ENCODE measurements at regions of chr3 and their contacts with region 1.

Region 1: GRCh38 chr3:156151824-156152428 is 31.5 kb downstream of the KCNAB1 start:
- DNase-seq: peak; percentile 29 to 74
- ATAC-seq: peak; percentile 79 to 91; a peak in 5 of 6 replicates
- H3K4me3 ChIP-seq: no peak overlapping the region
- H3K27ac ChIP-seq: no peak overlapping the region
- H3K4me1 ChIP-seq: no peaks in the 10 kb centered on the region
- CTCF ChIP-seq: peak; percentile 70
- EP300 ChIP-seq: no peak
- POLR2A ChIP-seq: no peak
- RAD21 ChIP-seq: peak; percentile 73 to 84

Region 2: DNA sequence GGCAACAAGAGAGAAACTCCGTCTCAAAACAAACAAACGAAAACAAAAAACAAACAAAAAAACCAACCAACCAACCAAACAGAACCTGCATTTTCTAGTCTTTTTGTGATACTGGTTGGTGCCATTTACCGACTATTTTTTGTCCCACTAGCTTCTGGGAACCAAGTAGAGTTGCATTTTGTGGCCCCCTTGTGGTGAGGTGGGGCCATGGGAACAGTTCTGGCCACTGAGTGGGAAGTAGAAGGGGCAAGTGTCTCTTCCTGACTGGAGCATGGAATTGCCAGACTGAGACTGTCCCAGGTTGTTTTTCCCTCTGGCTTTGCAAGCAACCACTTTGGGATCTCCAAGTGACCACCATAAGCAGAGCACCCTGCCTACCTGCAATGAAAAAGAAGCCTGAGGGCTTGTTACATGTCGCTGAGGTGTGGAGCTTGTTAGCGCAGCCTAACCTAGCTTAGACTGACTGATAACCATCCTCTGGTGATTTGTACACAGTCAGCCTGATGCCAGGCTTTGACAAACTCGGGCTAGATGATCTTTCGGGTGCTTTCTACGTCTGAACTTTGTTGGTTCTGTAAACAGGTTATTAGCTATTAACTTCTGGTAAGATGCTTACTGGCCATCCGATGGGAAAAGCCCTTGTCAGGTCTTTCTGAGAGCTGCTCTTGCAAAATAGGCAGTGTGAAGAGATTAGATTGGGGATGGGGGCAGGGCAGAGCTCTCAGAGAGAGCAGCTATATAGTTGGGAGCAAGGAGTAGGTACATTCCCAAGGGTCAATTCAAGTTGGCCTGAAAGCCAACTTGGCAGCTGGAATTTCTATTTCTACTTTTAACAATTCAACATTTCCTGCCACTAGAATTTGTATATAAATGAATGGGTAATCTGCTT is 230.8 kb after region 1 on chr3:
- CTCF ChIA-PET with region 1: interaction called, 41 read pairs
- POLR2A ChIA-PET with region 1: no interaction called
- DNase-seq: peak; percentile 47 to 53
- ATAC-seq: peak; percentile 85 to 96
- H3K4me3 ChIP-seq: no peak overlapping the region
- H3K27ac ChIP-seq: no peak overlapping the region
- H3K4me1 ChIP-seq: no peaks in the 10 kb centered on the region
- CTCF ChIP-seq: peak; percentile 50
- EP300 ChIP-seq: no peak
- POLR2A ChIP-seq: no peak
- RAD21 ChIP-seq: peak; percentile 59 to 67

Region 3: GRCh38 chr3:156509189-156510174 is 357.6 kb after region 1 on chr3:
- CTCF ChIA-PET with region 1: interaction called, 182 read pairs
- POLR2A ChIA-PET with region 1: interaction called, 4 read pairs
- DNase-seq: peak; percentile 51 to 63
- ATAC-seq: peak; percentile 78 to 93; a peak in 5 of 6 replicates
- H3K4me3 ChIP-seq: no peak overlapping the region
- H3K27ac ChIP-seq: no peak overlapping the region
- H3K4me1 ChIP-seq: peaks cover 11% of the 10 kb centered on the region
- CTCF ChIP-seq: peak; percentile 80
- EP300 ChIP-seq: no peak
- POLR2A ChIP-seq: no peak
- RAD21 ChIP-seq: peak; percentile 69 to 70

Region 4: GRCh38 chr3:157130467-157131251 is 978.7 kb after region 1 on chr3:
- CTCF ChIA-PET with region 1: interaction called, 43 read pairs
- POLR2A ChIA-PET with region 1: no interaction called
- DNase-seq: peak; percentile 75 to 85
- ATAC-seq: peak; percentile 60 to 68
- H3K4me3 ChIP-seq: peak overlapping the region; percentile 2; the same call in 1 of the 3 replicates
- H3K27ac ChIP-seq: peak overlapping the region; percentile 77 to 80
- H3K4me1 ChIP-seq: peaks cover 66% of the 10 kb centered on the region
- CTCF ChIP-seq: peak; percentile 83
- EP300 ChIP-seq: peak in 1 of 2 experiments; percentile 44; a peak in 1 of 5 replicates
- POLR2A ChIP-seq: no peak
- RAD21 ChIP-seq: peak; percentile 77 to 87